CD8-positive, alpha-beta T cell (primary cell): ENCODE measurements at regions of chr4 and their contacts with region 1.

Region 1: GRCh38 chr4:56149591-56149990 is 200.8 kb downstream of the CEP135 start:
- DNase-seq: no peak
- ATAC-seq: no peak
- H3K4me3 ChIP-seq: no peak overlapping the region
- H3K4me3 Mint-ChIP-seq: no peak overlapping the region
- H3K27ac ChIP-seq: no peak overlapping the region
- H3K27ac Mint-ChIP-seq: no peak overlapping the region
- H3K4me1 ChIP-seq: no peaks in the 10 kb centered on the region
- H3K4me1 Mint-ChIP-seq: no peaks in the 10 kb centered on the region
- H3K27me3 ChIP-seq: no peaks in the 10 kb centered on the region
- H3K27me3 Mint-ChIP-seq: peaks cover 10% of the 10 kb centered on the region
- CTCF ChIP-seq: no peak

Region 2: DNA sequence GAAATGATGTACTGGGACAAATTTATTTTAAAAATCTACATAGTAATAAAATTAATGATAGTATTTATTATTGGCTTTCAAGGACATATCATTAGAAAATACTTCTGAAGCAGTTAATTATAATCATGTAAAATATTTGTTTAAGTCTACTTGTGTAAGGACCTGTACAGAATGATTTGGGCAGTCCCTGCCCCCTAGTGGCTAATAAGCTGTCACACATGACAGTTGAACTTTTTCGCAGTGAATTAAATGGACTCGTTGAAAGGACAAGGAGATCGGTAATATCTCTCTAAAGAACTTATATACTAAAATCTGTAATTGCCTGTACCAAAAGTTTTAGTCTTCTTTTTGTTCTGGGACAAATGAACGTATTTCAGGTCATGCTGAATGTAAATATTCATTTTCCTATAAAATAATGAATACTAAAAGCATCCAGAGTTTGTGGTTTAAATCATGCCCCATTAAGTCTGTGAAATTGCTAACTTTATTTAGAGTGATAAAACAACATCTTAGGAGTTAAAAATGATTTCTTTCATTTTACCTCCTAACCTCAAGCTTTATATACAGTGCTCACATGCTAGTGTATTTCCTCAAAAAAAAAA is 282.5 kb before region 1 on chr4:
- CTCF ChIA-PET with region 1: no interaction called
- POLR2A ChIA-PET with region 1: no interaction called
- intact Hi-C with region 1: no loop called
- DNase-seq: peak in 5 of 9 experiments; percentile 14 to 74 (median 32)
- ATAC-seq: peak; percentile 87
- H3K4me3 ChIP-seq: no peak overlapping the region
- H3K4me3 Mint-ChIP-seq: no peak overlapping the region
- H3K27ac ChIP-seq: no peak overlapping the region
- H3K27ac Mint-ChIP-seq: no peak overlapping the region
- H3K4me1 ChIP-seq: no peaks in the 10 kb centered on the region
- H3K4me1 Mint-ChIP-seq: peaks cover 9% of the 10 kb centered on the region
- H3K27me3 ChIP-seq: no peaks in the 10 kb centered on the region
- H3K27me3 Mint-ChIP-seq: no peaks in the 10 kb centered on the region
- CTCF ChIP-seq: peak; percentile 92

Region 3: GRCh38 chr4:56127716-56128115 is 21.9 kb before region 1 on chr4:
- CTCF ChIA-PET with region 1: no interaction called
- POLR2A ChIA-PET with region 1: no interaction called
- intact Hi-C with region 1: no loop called
- DNase-seq: no peak
- ATAC-seq: no peak
- H3K4me3 ChIP-seq: no peak overlapping the region
- H3K4me3 Mint-ChIP-seq: no peak overlapping the region
- H3K27ac ChIP-seq: no peak overlapping the region
- H3K27ac Mint-ChIP-seq: no peak overlapping the region
- H3K4me1 ChIP-seq: no peaks in the 10 kb centered on the region
- H3K4me1 Mint-ChIP-seq: no peaks in the 10 kb centered on the region
- H3K27me3 ChIP-seq: no peaks in the 10 kb centered on the region
- H3K27me3 Mint-ChIP-seq: peaks cover 11% of the 10 kb centered on the region
- CTCF ChIP-seq: no peak

Region 4: DNA sequence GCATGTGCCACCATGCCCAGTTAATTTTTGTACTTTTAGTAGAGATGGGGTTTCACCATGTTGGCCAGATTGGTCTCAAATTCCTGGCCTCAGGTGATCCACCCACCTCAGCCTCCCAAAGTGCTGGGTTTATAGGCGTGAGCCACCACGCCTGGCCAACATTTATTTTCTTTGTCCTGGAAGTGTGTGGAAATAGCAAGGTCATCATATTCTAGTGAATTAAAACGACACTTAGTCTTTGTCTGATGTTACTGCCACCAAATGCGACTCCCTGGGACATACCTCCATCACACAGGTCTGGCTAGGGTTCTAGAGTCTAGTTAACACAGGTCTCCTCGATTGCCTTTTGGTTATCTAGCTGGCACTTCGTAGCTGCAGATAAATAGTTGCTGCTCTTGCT is 34.6 kb after region 1 on chr4:
- CTCF ChIA-PET with region 1: no interaction called
- POLR2A ChIA-PET with region 1: no interaction called
- intact Hi-C with region 1: loop called in 1 of 2 experiments (anchors 1 kb)
- DNase-seq: no peak
- ATAC-seq: no peak
- H3K4me3 ChIP-seq: no peak overlapping the region
- H3K4me3 Mint-ChIP-seq: no peak overlapping the region
- H3K27ac ChIP-seq: no peak overlapping the region
- H3K27ac Mint-ChIP-seq: no peak overlapping the region
- H3K4me1 ChIP-seq: no peaks in the 10 kb centered on the region
- H3K4me1 Mint-ChIP-seq: no peaks in the 10 kb centered on the region
- H3K27me3 ChIP-seq: peaks cover 0 to 2% of the 10 kb centered on the region in 2 experiments
- H3K27me3 Mint-ChIP-seq: peaks cover 13% of the 10 kb centered on the region
- CTCF ChIP-seq: no peak